Right cardiac atrium (tissue), 5 donors: ENCODE measurements at regions of chr7 and their contacts with region 1.

Region 1: DNA sequence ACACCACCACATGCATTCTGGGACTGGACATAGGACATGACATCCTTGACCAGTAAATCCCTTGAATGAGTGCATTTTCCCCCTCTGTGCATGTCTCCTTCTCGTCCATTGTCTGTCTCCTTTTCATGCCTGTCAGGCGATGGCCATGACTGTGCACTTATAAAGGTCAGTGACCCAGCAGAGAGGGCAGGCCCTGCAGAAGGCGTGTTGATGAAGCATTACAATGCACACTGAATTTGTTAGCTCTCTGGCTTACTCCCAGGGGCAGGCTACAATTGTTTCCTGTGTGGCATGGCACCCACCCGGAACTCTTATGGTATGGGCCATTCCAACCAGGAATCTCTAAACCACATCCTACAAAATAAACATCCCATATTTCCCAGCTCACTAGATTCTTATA is 71.1 kb downstream of the SAMD9 start:
- DNase-seq: no peak
- ATAC-seq: peak in 1 of 2 donors; percentile 22
- H3K4me3 ChIP-seq: no peak overlapping the region
- H3K27ac ChIP-seq: no peak overlapping the region
- H3K4me1 ChIP-seq: no peaks in the 10 kb centered on the region
- H3K27me3 ChIP-seq: no peaks in the 10 kb centered on the region

Region 2: DNA sequence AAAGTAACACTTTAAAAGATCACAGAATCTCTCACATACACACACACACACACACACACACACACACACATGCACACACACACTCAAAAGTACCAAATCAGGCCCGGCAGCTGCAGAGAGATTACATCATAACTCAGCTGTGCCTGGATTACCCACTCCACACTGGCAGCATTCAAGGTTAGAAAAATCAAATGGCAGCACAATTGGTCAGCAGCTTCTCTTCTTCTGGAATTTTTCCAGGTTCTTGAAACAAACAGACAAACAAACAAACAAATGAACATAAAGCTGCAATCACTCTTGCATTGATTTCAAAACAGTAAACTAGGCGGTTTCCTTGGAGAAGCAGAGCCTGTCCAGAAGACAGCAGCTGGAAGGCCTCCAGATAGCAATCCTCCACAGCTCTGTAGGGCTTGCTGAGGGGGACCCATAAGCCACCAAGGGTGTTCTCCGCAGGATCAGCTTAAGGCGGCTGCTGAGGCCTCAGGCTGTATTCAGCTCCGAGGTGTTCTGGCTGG is 431.9 kb before region 1 on chr7:
- intact Hi-C with region 1: loop called in 1 of 4 experiments (anchors 5 kb)
- DNase-seq: peak in 1 of 3 donors; percentile 36
- ATAC-seq: peak; percentile 39 to 71
- H3K4me3 ChIP-seq: no peak overlapping the region
- H3K27ac ChIP-seq: peak overlapping the region; percentile 23
- H3K4me1 ChIP-seq: no peaks in the 10 kb centered on the region
- H3K27me3 ChIP-seq: no peaks in the 10 kb centered on the region